ENCODE measurements at regions of chr1 and their contacts with region 1.

Region 1: DNA sequence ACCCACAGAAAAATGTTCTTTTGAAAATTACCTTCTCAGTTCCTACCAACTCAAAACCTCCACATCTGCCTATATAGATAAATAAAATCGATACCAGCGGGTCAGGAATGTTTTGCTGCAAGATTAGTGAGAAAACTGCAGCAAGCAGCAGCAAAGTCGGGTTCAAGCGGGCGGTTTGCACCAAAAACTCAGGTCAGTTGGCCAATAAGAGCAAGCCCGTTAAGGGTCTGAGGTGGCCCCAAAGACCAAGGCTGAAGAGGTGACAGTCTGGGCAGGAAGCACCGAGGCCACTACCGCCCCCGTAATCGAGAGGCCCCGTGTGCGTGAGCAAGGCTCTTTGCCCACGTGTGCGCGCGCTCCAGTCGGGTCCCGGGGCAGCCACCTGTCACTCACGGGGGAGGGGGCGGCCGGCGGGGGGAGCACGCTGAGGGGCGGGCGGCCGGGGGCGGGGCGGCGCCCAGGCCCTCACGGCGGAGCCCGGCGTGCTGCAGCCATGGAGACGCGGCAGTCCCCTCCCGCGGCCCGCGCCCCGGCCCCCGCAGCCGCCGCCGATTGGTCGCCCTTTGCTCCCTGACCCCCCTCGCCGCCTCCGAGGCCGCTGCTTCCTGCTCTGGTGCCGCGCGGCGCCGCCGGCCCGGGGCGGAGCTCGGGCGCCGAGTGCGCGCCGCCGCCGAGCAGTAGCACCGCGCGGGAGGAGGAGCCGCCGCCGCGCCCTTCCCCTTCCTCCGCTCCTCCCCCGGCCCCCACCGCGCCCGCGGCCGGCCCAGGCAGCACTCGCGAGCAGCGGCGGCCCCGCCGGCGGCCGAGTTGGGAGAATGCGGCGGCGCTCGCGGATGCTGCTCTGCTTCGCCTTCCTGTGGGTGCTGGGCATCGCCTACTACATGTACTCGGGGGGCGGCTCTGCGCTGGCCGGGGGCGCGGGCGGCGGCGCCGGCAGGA is at the start of gene GALNT2:
- DNase-seq: peak; percentile 95
- ATAC-seq: peak; percentile 90
- H3K4me3 Mint-ChIP-seq: peak within 1 kb of the TSS; percentile 83
- H3K27ac Mint-ChIP-seq: peak within 1 kb of the TSS; percentile 89
- H3K4me1 Mint-ChIP-seq: peaks cover 37% of the 10 kb centered on the region
- H3K27me3 Mint-ChIP-seq: no peaks in the 10 kb centered on the region
- total RNA-seq, gene GALNT2: 48.2 to 51.0 TPM

Region 2: GRCh38 chr1:229341774-229342655 is 724.7 kb before region 1 on chr1:
- CTCF ChIA-PET with region 1: no interaction called
- POLR2A ChIA-PET with region 1: no interaction called
- intact Hi-C with region 1: loop called in 1 of 2 experiments (anchors 2 kb)
- DNase-seq: peak; percentile 85
- ATAC-seq: peak; percentile 76
- H3K4me3 Mint-ChIP-seq: peak overlapping the region; percentile 88
- H3K27ac Mint-ChIP-seq: peak overlapping the region; percentile 77
- H3K4me1 Mint-ChIP-seq: peaks cover 45% of the 10 kb centered on the region
- H3K27me3 Mint-ChIP-seq: peaks cover 9% of the 10 kb centered on the region

Region 3: DNA sequence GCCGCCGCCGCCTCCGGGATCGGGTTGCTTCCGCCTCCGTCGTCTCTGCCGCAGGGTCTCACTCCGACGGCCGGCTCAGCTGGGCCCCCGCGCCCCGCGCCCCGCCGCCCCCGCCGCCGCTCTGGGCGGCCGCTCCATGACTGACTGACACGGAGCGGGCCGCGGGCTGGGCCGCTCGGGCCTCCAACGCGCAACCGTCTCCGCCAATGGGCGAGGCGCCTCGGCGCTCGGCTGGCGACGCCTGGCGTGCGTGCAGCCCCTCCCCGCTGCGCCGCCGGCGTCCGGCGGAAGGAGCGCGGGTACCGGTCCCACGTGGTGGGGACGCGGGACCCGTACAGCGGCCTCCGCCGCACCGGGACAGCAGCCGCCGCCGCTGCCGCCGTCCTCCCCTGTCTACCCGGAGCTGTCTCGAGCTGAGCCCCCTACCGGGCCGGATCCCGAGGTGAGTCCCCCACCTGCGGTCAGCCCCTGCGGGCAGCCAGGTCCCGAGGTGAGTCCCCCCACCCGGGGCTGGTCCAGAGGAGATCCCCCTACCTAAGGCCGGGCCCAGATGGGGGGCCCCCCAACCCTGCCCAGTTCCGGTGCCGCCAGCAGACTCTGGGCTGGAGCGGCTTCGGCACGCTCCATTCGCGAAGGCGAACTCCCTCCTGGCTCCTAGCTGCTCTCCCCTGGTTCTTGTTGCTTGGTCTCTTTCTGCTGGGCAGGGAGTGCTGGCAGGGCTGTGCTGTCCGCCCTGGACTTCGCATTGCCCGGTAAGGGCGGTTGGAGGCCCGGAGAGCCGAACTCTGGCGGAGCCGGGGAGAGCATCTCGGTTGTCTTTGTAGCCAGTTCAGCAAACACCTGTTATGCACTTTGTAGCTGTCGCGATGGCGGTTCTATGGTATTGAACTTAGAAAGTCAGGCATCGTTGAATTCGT is 440.6 kb before region 1 on chr1 and contains the starts of genes TAF5L and URB2:
- CTCF ChIA-PET with region 1: no interaction called
- POLR2A ChIA-PET with region 1: no interaction called
- intact Hi-C with region 1: loop called in 1 of 2 experiments (anchors 1 kb)
- DNase-seq: peak; percentile 93
- ATAC-seq: peak; percentile 92
- H3K4me3 Mint-ChIP-seq: peak within 1 kb of the TSS; percentile 89
- H3K27ac Mint-ChIP-seq: peak within 1 kb of the TSS; percentile 96
- H3K4me1 Mint-ChIP-seq: peaks cover 57% of the 10 kb centered on the region
- H3K27me3 Mint-ChIP-seq: no peaks in the 10 kb centered on the region
- total RNA-seq, gene TAF5L: 16.5 to 17.6 TPM
- total RNA-seq, gene URB2: 13.9 to 16.5 TPM

Region 4: GRCh38 chr1:230084138-230084880 is 17.6 kb after region 1 on chr1:
- CTCF ChIA-PET with region 1: interaction called, 3 read pairs
- POLR2A ChIA-PET with region 1: interaction called, 3 read pairs
- intact Hi-C with region 1: loop called (anchors 1 kb)
- DNase-seq: peak; percentile 89
- ATAC-seq: peak; percentile 97
- H3K4me3 Mint-ChIP-seq: peak overlapping the region; percentile 11
- H3K27ac Mint-ChIP-seq: peak overlapping the region; percentile 87
- H3K4me1 Mint-ChIP-seq: peaks cover 74% of the 10 kb centered on the region
- H3K27me3 Mint-ChIP-seq: no peaks in the 10 kb centered on the region

Region 5: DNA sequence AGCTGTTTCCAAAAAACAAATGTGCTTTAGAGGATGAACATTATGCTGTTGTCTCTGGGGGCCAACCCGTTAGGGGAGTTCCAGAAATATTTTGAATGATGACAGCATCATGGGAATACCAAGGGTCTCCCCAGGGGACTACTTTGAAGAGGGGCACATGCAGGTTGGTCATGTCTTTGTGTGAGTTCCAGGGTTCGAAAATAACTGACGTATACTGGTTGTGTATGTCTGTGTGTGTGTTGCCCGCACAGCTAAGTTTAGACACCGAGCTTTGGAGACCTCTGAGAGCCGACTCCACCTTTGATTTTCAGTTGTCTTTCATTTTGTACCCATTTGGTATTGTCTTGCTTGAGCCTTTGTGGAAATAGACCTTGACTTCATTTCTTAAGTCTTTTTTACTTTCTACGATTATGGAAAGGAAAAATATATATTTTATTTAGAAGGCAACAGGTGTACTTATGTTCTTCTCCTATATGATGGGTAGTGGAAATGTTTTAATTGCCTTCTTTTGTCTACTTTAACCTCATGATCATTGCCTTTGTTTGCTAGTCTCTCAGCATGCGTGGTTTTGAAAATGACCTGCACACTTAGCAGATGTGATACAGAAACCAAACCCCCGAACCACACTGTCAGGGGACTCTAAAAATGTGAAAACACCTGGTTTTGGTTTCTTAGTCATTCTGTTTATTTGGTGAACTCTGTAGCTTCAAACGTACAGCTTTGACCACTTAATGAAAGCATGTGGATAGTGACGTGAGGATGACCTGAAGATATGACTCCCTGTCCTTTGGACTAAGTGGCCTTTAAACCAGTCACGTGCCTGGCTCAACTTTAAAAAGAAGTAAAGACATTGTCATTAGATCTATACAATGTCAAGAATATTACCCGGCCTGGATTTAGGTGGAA is 56.8 kb after region 1 on chr1:
- CTCF ChIA-PET with region 1: no interaction called
- POLR2A ChIA-PET with region 1: interaction called, 3 read pairs
- intact Hi-C with region 1: loop called in 1 of 2 experiments (anchors 5 kb)
- DNase-seq: peak; percentile 57
- ATAC-seq: peak; percentile 49
- H3K4me3 Mint-ChIP-seq: no peak overlapping the region
- H3K27ac Mint-ChIP-seq: peak overlapping the region; percentile 53
- H3K4me1 Mint-ChIP-seq: peaks cover 69% of the 10 kb centered on the region
- H3K27me3 Mint-ChIP-seq: no peaks in the 10 kb centered on the region

Region 6: GRCh38 chr1:230642263-230642959 is 575.7 kb after region 1 on chr1 and contains the start of gene COG2:
- CTCF ChIA-PET with region 1: no interaction called
- POLR2A ChIA-PET with region 1: no interaction called
- intact Hi-C with region 1: loop called in 1 of 2 experiments (anchors 1 kb)
- DNase-seq: peak; percentile 97
- ATAC-seq: peak; percentile 92
- H3K4me3 Mint-ChIP-seq: peak within 1 kb of the TSS; percentile 96
- H3K27ac Mint-ChIP-seq: peak within 1 kb of the TSS; percentile 88
- H3K4me1 Mint-ChIP-seq: peaks cover 48% of the 10 kb centered on the region
- H3K27me3 Mint-ChIP-seq: peaks cover 13% of the 10 kb centered on the region
- total RNA-seq, gene COG2: 28.1 to 32.0 TPM